Common myeloid progenitor, CD34-positive (primary cell): ENCODE measurements at regions of chr17 and their contacts with region 1.

Region 1: DNA sequence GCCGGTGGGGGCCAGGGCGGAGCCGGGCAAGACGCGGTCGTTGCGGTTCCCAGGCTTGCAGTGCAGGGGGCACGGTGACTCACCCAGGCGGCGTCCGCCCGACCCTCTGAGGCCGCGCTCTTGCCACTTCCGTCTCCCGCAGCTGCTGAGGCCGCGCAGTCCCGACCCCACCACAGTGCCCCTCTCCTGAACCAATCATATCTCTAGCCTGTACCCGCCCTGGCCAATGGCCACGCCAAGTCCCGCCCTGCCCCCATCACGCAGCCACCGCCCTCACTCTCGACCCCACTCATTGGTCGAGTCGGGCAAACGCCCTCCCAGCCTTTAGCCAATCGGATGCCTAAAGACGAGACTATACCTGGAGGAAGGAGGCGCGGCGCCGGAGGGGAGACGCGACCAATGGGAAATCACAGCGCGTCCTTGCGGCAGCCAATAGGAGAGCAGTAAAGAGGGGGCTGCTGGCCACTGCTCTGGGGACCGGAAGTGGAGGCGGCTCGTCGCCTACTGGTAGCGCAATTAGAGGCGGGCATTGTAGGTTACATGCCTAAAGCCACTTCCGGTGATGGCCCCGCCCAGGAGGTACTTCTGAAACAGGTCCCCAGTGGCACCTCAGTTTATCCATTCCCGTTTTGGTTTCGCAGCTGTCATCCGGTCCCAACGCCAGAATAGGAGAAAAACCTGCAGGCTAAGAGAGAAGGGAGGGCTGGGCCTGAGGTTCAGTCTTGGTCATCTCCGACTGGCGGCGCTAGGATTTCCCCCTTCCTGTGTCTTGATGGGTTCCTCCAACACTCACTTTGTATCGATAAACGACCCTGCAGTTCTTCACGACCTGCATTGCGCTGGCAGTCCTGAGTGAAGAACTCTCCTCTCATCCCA is 3.5 kb upstream of the MTMR4 start:
- DNase-seq: peak; percentile 100
- H3K4me3 ChIP-seq: peak overlapping the region; percentile 89 to 99 (median 97)
- H3K27ac ChIP-seq: peak overlapping the region; percentile 90 to 94
- H3K4me1 ChIP-seq: peaks cover 11 to 38% (median 33%) of the 10 kb centered on the region in 4 experiments
- H3K27me3 ChIP-seq: no peaks in the 10 kb centered on the region

Region 2: GRCh38 chr17:58541249-58541648 is 23.3 kb after region 1 on chr17:
- CTCF ChIA-PET with region 1: interaction called, 10 read pairs
- POLR2A ChIA-PET with region 1: no interaction called
- DNase-seq: peak; percentile 42 to 60 (median 55)
- H3K4me3 ChIP-seq: no peak overlapping the region
- H3K27ac ChIP-seq: no peak overlapping the region
- H3K4me1 ChIP-seq: peaks cover 0 to 8% (median 3%) of the 10 kb centered on the region in 4 experiments
- H3K27me3 ChIP-seq: peaks cover 0 to 2% (median 0%) of the 10 kb centered on the region in 5 experiments

Region 3: GRCh38 chr17:58587702-58588254 is 69.8 kb after region 1 on chr17:
- CTCF ChIA-PET with region 1: interaction called, 15 read pairs
- POLR2A ChIA-PET with region 1: interaction called, 4 read pairs
- DNase-seq: peak; percentile 52 to 67 (median 63)
- H3K4me3 ChIP-seq: no peak overlapping the region
- H3K27ac ChIP-seq: no peak overlapping the region
- H3K4me1 ChIP-seq: no peaks in the 10 kb centered on the region
- H3K27me3 ChIP-seq: no peaks in the 10 kb centered on the region

Region 4: GRCh38 chr17:58658804-58659713 is 141.1 kb after region 1 on chr17:
- CTCF ChIA-PET with region 1: no interaction called
- POLR2A ChIA-PET with region 1: interaction called, 17 read pairs
- DNase-seq: peak; percentile 97 to 99 (median 98)
- H3K4me3 ChIP-seq: peak overlapping the region in 6 of 7 experiments; percentile 57 to 76 (median 62)
- H3K27ac ChIP-seq: peak overlapping the region; percentile 99 to 100
- H3K4me1 ChIP-seq: peaks cover 0 to 7% (median 4%) of the 10 kb centered on the region in 4 experiments
- H3K27me3 ChIP-seq: no peaks in the 10 kb centered on the region